ENCODE measurements at regions of chr13 and their contacts with region 1.

Region 1: DNA sequence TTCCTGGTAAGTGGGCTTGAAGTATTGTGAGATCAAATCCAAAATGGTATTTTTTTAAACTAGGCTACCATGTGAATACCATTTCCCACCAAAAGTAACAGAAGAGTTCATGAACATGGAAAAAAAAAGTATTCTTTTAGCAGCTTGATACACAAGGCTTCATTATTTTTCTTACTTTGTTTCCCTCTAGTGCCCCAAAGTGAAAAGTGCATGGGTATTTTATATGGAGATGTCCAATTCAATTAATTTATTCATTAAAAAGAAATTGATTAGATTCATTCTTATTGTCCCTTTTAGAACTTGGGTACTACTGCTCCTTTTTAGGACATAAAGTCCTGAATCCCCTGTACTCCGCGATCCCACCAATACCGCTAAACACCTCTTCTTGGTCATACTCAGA is 28.6 kb upstream of the SCEL start:
- DNase-seq: no peak
- ATAC-seq: no peak
- H3K4me3 ChIP-seq: no peak overlapping the region
- H3K27ac ChIP-seq: no peak overlapping the region
- H3K4me1 ChIP-seq: no peaks in the 10 kb centered on the region
- H3K27me3 ChIP-seq: no peaks in the 10 kb centered on the region
- CTCF ChIP-seq: peak in 1 of 5 experiments; percentile 30
- POLR2A ChIP-seq: no peak

Region 2: DNA sequence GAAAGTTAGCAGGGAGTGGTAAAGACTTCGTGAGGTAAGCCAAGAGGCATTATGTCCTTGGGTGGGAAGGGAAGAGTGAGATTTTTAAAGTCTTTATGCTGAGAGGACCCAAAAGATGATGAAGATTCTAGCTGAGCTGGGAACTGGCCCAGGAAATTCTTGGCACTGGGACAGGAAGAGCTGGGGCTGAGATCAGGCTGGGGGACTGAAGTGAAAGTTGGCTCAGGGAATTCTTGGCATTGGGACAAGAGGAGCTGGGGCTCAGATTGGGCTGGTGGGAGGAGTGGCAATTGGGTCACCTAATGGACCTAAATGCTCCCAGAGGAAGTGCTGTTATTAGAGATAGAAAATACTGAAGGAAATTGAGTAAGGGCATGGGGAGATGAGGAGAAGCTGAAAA is 37.5 kb after region 1 on chr13:
- in situ Hi-C with region 1: no loop called
- intact Hi-C with region 1: no loop called
- DNase-seq: peak; percentile 7 to 40
- ATAC-seq: peak; percentile 50 to 70
- H3K4me3 ChIP-seq: no peak overlapping the region
- H3K27ac ChIP-seq: no peak overlapping the region
- H3K4me1 ChIP-seq: peaks cover 0 to 5% of the 10 kb centered on the region in 2 donors
- H3K27me3 ChIP-seq: no peaks in the 10 kb centered on the region
- CTCF ChIP-seq: no peak
- POLR2A ChIP-seq: no peak

Region 3: DNA sequence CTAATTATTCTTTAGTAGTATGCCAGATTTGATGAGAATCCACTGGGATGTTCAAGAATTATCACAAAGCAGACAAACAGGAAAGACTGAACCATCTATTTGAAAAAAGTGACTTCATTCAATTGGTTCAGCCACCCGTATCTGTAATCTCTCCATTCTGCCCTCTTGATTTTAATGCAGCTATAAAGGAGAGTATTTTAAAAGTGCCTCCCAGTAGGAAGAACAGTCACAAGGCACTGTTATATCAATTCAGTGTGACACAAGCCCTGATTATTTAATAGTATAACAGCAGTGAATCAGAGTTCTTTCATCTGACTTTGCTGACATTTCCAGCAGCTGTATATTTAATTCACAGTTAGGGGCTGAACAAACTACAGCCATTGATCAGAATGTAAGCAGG is 113.3 kb after region 1 on chr13:
- in situ Hi-C with region 1: loop called in 1 of 4 experiments (anchors 25 kb)
- intact Hi-C with region 1: no loop called
- DNase-seq: no peak
- ATAC-seq: no peak
- H3K4me3 ChIP-seq: no peak overlapping the region
- H3K27ac ChIP-seq: no peak overlapping the region
- H3K4me1 ChIP-seq: no peaks in the 10 kb centered on the region
- H3K27me3 ChIP-seq: no peaks in the 10 kb centered on the region
- CTCF ChIP-seq: no peak
- POLR2A ChIP-seq: no peak

Measured in gastrocnemius medialis (tissue), 4 donors.